ENCODE measurements at regions of chr7 and their contacts with region 1.

Region 1: GRCh38 chr7:144565586-144565985 is 162.1 kb upstream of the NOBOX start:
- DNase-seq: no peak
- H3K4me3 ChIP-seq: no peak overlapping the region
- H3K27ac ChIP-seq: no peak overlapping the region
- H3K4me1 ChIP-seq: no peaks in the 10 kb centered on the region
- H3K27me3 ChIP-seq: no peaks in the 10 kb centered on the region
- CTCF ChIP-seq: no peak

Region 2: DNA sequence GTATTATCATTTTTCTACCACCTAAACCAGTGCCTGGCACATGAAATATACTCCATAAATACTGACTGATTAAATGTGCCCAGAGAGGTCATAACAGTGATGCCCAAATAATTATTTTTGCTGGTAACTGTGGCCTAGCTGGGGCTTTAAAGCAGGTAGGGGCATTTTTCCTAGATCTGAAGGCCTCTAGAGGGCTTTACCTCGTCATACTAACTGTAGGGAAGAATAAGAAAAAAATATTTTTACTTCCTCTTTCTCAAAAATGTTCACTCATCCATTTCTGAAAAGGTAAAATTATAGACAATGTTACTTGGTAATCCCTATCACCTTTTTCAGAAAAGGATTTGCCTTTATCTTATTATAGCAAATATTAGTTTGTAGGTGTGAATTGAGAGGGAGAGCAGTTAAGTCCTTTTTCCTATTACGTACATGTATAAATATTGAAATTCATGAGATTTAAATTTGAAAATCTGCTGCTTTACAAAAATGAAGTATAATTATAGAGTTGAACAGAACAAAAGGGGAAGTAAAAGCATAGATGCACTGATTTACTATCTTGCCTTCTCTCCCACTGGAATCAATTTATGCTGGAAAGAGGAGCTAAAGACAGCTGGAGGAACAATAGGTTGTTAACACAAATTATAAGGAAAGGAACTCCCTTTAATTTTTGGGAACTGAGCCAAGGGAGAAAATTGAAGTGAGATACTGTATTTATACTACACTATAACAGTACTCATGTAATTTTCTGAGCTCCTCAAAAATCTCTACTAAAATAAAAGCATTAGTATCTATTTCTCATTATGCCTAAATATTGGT is 90.6 kb before region 1 on chr7:
- CTCF ChIA-PET with region 1: no interaction called
- dilution Hi-C with region 1: loop called (anchors 5 kb)
- in situ Hi-C with region 1: no loop called
- intact Hi-C with region 1: no loop called
- DNase-seq: no peak
- H3K4me3 ChIP-seq: no peak overlapping the region
- H3K27ac ChIP-seq: no peak overlapping the region
- H3K4me1 ChIP-seq: no peaks in the 10 kb centered on the region
- H3K27me3 ChIP-seq: no peaks in the 10 kb centered on the region
- CTCF ChIP-seq: no peak